ENCODE measurements at regions of chr1 and their contacts with region 1.

Region 1: DNA sequence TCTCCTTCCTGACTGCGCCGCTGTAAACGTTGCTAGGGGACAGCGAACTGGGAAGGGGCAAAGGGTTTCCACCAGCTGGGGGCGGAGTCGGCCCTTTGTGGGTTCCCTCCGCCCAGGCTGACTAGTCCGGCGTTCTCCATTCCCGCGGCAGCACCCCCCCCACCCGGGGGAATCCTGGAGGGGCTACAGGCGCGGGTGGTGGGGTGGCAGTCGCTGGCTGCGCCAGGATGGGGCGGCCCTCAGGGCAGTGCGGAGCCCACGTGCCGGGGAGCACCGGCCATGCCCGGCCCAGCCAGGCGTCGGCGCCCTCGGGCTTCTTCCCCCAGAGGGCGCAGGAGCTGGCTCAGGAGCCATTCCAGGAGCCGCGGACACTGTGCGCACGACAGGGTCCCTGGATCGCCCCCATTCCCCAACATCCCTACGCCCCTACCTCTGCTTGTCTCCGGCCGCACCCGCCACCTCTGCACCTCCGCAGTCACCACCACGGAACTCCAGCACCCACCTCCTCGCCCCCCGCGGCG is 476 bp downstream of the BATF3 start:
- DNase-seq: peak; percentile 11 to 69 (median 40)
- ATAC-seq: peak; percentile 79
- H3K4me3 ChIP-seq: peak overlapping the region; percentile 56
- H3K4me3 Mint-ChIP-seq: peak overlapping the region; percentile 79 to 90 (median 85)
- H3K27ac ChIP-seq: no peak overlapping the region
- H3K27ac Mint-ChIP-seq: peak overlapping the region in 7 of 9 donors; percentile 7 to 68 (median 47)
- H3K4me1 ChIP-seq: peaks cover 9 to 20% of the 10 kb centered on the region in 2 donors
- H3K4me1 Mint-ChIP-seq: peaks cover 28 to 53% (median 46%) of the 10 kb centered on the region in 7 donors
- H3K27me3 ChIP-seq: no peaks in the 10 kb centered on the region
- H3K27me3 Mint-ChIP-seq: peaks cover 0 to 31% (median 5%) of the 10 kb centered on the region in 5 donors

Region 2: GRCh38 chr1:210711825-210712612 is 1987.1 kb before region 1 on chr1:
- CTCF ChIA-PET with region 1: no interaction called
- POLR2A ChIA-PET with region 1: no interaction called
- intact Hi-C with region 1: no loop called
- DNase-seq: no peak
- ATAC-seq: no peak
- H3K4me3 ChIP-seq: no peak overlapping the region
- H3K4me3 Mint-ChIP-seq: no peak overlapping the region
- H3K27ac ChIP-seq: no peak overlapping the region
- H3K27ac Mint-ChIP-seq: no peak overlapping the region
- H3K4me1 ChIP-seq: no peaks in the 10 kb centered on the region
- H3K4me1 Mint-ChIP-seq: no peaks in the 10 kb centered on the region
- H3K27me3 ChIP-seq: no peaks in the 10 kb centered on the region
- H3K27me3 Mint-ChIP-seq: no peaks in the 10 kb centered on the region

Region 3: GRCh38 chr1:212608209-212608955 is 90.8 kb before region 1 on chr1 and contains the start of gene ATF3:
- CTCF ChIA-PET with region 1: no interaction called
- POLR2A ChIA-PET with region 1: no interaction called
- intact Hi-C with region 1: loop called in 1 of 2 experiments (anchors 2 kb)
- DNase-seq: peak; percentile 27 to 90 (median 47)
- ATAC-seq: peak; percentile 87
- H3K4me3 ChIP-seq: peak within 1 kb of the TSS; percentile 70
- H3K4me3 Mint-ChIP-seq: peak within 1 kb of the TSS; percentile 90 to 98 (median 95)
- H3K27ac ChIP-seq: no peak within 1 kb of the TSS
- H3K27ac Mint-ChIP-seq: peak within 1 kb of the TSS; percentile 40 to 98 (median 76)
- H3K4me1 ChIP-seq: peaks cover 17 to 23% of the 10 kb centered on the region in 2 donors
- H3K4me1 Mint-ChIP-seq: peaks cover 17 to 55% (median 21%) of the 10 kb centered on the region in 7 donors
- H3K27me3 ChIP-seq: peaks cover 17 to 26% of the 10 kb centered on the region in 2 donors
- H3K27me3 Mint-ChIP-seq: peaks cover 47 to 66% (median 58%) of the 10 kb centered on the region in 5 donors
- total RNA-seq, gene ATF3: 0.57 to 83.4 (median 12.5) TPM

Region 4: DNA sequence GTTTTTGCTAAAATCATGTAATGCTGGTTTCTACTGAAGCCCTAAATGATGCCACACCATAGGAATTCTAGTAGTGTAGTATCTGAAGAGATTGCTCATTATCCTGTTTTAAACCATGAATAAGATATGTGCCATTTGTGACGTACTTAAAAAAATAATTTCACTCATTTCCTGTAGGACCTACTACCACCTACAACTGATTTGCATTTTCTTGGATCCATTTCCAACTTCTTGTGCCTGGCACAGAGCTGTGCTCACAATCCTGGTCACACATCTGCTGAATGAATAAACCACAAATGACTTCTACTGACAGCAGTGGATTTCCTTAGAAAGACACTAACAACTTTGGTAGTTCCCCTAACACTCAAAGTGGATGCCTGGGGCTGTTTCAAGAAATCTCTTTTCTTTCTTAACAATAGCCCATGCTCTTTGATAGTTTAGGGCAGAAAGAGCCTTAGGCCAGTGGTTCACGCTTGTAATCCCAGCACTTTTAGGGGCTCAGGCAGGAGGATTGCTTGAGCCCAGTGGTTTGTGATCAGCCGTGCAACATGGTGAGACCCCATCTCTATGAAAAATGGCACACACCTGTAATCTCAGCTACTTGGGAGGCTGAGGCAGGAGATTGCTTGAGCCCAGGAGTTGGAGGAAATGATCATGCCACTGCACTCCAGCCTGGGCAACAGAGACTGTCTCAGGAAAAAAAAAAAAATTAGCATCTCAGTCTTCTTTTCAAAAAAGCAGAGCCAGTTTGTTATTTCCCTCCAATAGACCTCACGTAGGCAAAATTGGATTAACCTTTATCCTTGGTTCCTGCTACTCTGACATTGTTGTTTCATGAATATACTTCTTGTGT is 13.5 kb after region 1 on chr1:
- CTCF ChIA-PET with region 1: no interaction called
- POLR2A ChIA-PET with region 1: interaction called, 3 read pairs
- intact Hi-C with region 1: loop called in 1 of 2 experiments (anchors 1 kb)
- DNase-seq: no peak
- ATAC-seq: no peak
- H3K4me3 ChIP-seq: no peak overlapping the region
- H3K4me3 Mint-ChIP-seq: no peak overlapping the region
- H3K27ac ChIP-seq: no peak overlapping the region
- H3K27ac Mint-ChIP-seq: peak overlapping the region in 1 of 9 donors; percentile 33
- H3K4me1 ChIP-seq: no peaks in the 10 kb centered on the region
- H3K4me1 Mint-ChIP-seq: peaks cover 0 to 23% (median 0%) of the 10 kb centered on the region in 7 donors
- H3K27me3 ChIP-seq: no peaks in the 10 kb centered on the region
- H3K27me3 Mint-ChIP-seq: peaks cover 0 to 20% (median 0%) of the 10 kb centered on the region in 5 donors

Region 5: DNA sequence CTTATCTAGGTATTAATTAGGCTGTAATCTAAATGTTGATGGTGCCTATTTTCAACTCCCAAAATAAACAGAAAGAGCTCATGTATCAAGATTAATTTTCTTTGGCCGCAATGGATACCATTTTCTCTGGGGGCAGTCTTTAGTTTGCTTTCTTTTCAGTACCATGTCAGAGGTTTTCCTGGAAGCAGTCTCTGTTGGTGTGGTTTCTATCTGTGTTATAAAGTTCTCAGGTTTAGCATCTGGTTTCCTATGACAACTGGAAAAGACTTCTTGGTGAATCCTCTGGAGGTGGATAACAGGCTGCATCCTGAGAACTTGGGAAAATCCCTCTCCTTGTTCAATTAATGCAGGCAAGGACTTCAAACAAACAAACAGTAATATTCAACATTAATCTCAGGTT is 39.2 kb after region 1 on chr1:
- CTCF ChIA-PET with region 1: interaction called, 4 read pairs
- POLR2A ChIA-PET with region 1: interaction called, 3 read pairs
- intact Hi-C with region 1: loop called in 1 of 2 experiments (anchors 5 kb)
- DNase-seq: no peak
- ATAC-seq: no peak
- H3K4me3 ChIP-seq: no peak overlapping the region
- H3K4me3 Mint-ChIP-seq: peak overlapping the region in 1 of 10 donors; percentile 61
- H3K27ac ChIP-seq: no peak overlapping the region
- H3K27ac Mint-ChIP-seq: peak overlapping the region in 1 of 9 donors; percentile 85
- H3K4me1 ChIP-seq: no peaks in the 10 kb centered on the region
- H3K4me1 Mint-ChIP-seq: peaks cover 3 to 29% (median 22%) of the 10 kb centered on the region in 7 donors
- H3K27me3 ChIP-seq: no peaks in the 10 kb centered on the region
- H3K27me3 Mint-ChIP-seq: no peaks in the 10 kb centered on the region

Region 6: GRCh38 chr1:212760126-212760823 is 61.1 kb after region 1 on chr1:
- CTCF ChIA-PET with region 1: interaction called, 9 read pairs
- POLR2A ChIA-PET with region 1: no interaction called
- intact Hi-C with region 1: loop called in 1 of 2 experiments (anchors 1 kb)
- DNase-seq: peak in 7 of 9 donors; percentile 16 to 49 (median 41)
- ATAC-seq: peak; percentile 87
- H3K4me3 ChIP-seq: no peak overlapping the region
- H3K4me3 Mint-ChIP-seq: peak overlapping the region in 1 of 10 donors; percentile 21
- H3K27ac ChIP-seq: no peak overlapping the region
- H3K27ac Mint-ChIP-seq: peak overlapping the region in 1 of 9 donors; percentile 25
- H3K4me1 ChIP-seq: no peaks in the 10 kb centered on the region
- H3K4me1 Mint-ChIP-seq: peaks cover 8 to 64% (median 30%) of the 10 kb centered on the region in 7 donors
- H3K27me3 ChIP-seq: no peaks in the 10 kb centered on the region
- H3K27me3 Mint-ChIP-seq: no peaks in the 10 kb centered on the region

Region 7: DNA sequence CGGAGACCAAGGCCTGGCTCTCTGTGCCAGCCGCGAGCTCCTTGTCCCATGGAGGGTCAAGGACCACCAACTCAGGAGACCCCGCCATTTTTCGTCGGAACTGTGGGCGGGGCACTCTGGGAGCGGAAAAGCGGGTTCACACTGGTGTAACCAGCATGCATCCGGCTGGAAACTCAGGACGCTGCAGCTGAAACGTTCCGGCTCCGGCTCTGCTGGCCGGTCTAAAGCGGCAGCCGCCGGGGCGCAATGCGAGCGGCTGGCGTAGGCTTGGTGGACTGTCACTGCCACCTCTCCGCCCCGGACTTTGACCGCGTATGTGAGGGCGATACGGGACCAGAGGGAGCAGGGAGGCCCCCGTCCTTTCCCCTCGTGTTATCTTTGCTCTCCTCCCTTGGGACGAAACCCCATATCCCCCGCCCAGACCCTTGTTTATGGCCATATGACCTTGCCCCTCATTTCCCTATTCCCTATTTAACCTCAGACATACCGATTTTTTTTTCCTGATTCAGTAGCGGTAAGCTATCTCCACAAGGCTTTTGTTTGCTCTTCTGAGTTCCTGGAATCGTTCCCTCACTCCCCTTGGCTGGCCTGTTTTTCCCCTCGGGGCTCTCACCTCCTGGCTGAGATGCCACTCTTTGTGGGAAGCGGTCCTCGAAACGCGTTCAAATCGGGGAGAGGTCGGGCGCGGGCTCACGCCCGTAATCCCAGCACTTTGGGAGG is 92.7 kb after region 1 on chr1 and contains the starts of genes NSL1 and TATDN3:
- CTCF ChIA-PET with region 1: interaction called, 3 read pairs
- POLR2A ChIA-PET with region 1: interaction called, 6 read pairs
- intact Hi-C with region 1: loop called in 1 of 2 experiments (anchors 1 kb)
- DNase-seq: peak; percentile 82 to 99 (median 92)
- ATAC-seq: peak; percentile 98
- H3K4me3 ChIP-seq: peak within 1 kb of the TSS; percentile 100
- H3K4me3 Mint-ChIP-seq: peak within 1 kb of the TSS; percentile 86 to 98 (median 95)
- H3K27ac ChIP-seq: peak within 1 kb of the TSS; percentile 83
- H3K27ac Mint-ChIP-seq: peak within 1 kb of the TSS; percentile 87 to 99 (median 96)
- H3K4me1 ChIP-seq: peaks cover 17 to 19% of the 10 kb centered on the region in 2 donors
- H3K4me1 Mint-ChIP-seq: peaks cover 27 to 58% (median 43%) of the 10 kb centered on the region in 7 donors
- H3K27me3 ChIP-seq: no peaks in the 10 kb centered on the region
- H3K27me3 Mint-ChIP-seq: no peaks in the 10 kb centered on the region
- total RNA-seq, gene NSL1: 22.3 to 42.3 (median 37.7) TPM
- total RNA-seq, gene TATDN3: 10.0 to 17.7 (median 13.9) TPM

Region 8: DNA sequence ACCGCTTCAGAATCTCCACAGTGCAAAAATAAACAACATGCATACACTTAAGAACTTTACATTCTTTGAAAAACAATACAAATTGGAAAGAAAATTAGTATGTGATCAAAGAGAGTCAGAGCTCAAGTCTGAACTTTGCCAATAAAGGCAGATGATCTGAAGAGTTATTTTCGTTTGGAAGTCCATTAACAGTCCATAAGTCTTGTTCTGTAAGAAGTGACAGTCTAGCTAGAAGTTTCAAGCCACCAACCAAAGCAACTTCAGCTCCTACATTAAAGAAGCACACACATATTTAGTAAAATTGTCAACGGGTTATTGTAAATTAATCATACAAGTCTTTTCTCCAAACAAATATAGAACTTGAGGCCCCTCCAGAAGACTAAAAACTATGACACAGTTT is 295.8 kb after region 1 on chr1:
- CTCF ChIA-PET with region 1: no interaction called
- POLR2A ChIA-PET with region 1: no interaction called
- intact Hi-C with region 1: loop called in 1 of 2 experiments (anchors 1 kb)
- DNase-seq: no peak
- ATAC-seq: no peak
- H3K4me3 ChIP-seq: no peak overlapping the region
- H3K4me3 Mint-ChIP-seq: no peak overlapping the region
- H3K27ac ChIP-seq: no peak overlapping the region
- H3K27ac Mint-ChIP-seq: no peak overlapping the region
- H3K4me1 ChIP-seq: no peaks in the 10 kb centered on the region
- H3K4me1 Mint-ChIP-seq: peaks cover 0 to 12% (median 7%) of the 10 kb centered on the region in 7 donors
- H3K27me3 ChIP-seq: no peaks in the 10 kb centered on the region
- H3K27me3 Mint-ChIP-seq: no peaks in the 10 kb centered on the region